ENCODE measurements at regions of chr19 and their contacts with region 1.

Region 1: GRCh38 chr19:45016388-45017319 is 15.4 kb downstream of the RELB start:
- DNase-seq: peak; percentile 68 to 85 (median 78)
- H3K4me3 ChIP-seq: no peak overlapping the region
- H3K27ac ChIP-seq: no peak overlapping the region
- H3K4me1 ChIP-seq: peaks cover 0 to 5% of the 10 kb centered on the region in 2 donors
- H3K27me3 ChIP-seq: no peaks in the 10 kb centered on the region
- CTCF ChIP-seq: peak; percentile 30 to 67 (median 64)
- POLR2A ChIP-seq: no peak

Region 2: DNA sequence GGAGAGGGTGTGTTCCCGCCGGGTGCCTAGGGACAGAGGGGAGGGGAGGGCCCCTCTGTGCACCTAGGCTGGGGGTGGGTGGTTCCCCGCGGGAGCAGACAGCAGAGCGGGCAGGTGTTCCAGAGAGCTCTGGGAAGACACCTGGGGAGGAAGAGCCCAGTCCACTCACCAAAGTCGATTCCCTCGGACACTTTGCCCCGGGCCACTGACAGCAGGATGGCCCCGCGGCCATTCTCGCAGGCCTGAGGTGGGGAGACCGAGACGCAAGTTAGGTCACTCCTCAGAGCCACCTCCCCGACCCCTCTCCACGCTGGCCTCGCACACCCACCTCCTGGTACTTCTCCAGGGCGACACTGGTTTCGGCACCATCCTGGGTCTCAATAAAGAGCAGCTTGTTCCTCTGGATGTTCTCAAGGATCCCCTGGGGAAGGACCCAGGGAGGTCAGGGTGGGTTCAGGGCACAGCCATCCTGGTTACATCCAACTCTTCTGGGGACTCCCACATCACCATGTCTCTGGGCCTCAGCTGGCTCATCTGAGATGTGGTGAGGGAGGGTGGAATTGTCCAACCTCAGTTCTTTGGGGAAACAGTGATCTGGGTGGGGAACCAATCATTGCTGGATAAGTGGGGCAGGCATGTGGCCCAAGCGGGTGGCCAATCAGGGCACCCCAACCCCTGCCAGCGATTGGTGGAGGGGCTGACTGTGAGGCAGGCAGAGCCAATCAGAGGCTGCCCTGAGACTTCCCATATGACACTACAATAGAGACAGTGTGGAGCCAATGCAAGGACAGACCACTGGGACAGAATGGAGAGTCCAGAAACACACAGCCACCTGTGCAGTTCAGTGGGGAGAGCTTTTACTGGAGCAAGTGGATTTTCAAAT is 336.5 kb after region 1 on chr19:
- intact Hi-C with region 1: loop called in 1 of 2 experiments (anchors 10 kb)
- DNase-seq: no peak
- H3K4me3 ChIP-seq: no peak overlapping the region
- H3K27ac ChIP-seq: no peak overlapping the region
- H3K4me1 ChIP-seq: no peaks in the 10 kb centered on the region
- H3K27me3 ChIP-seq: no peaks in the 10 kb centered on the region
- CTCF ChIP-seq: no peak
- POLR2A ChIP-seq: no peak

Measured in adrenal gland (tissue), 19 donors.